ENCODE measurements at regions of chr6 and their contacts with region 1.

Region 1: GRCh38 chr6:22062807-22063408 is 233.9 kb downstream of the PRL start:
- DNase-seq: peak; percentile 9 to 88 (median 65)
- ATAC-seq: peak; percentile 85
- H3K4me3 ChIP-seq: peak overlapping the region; percentile 12
- H3K4me3 Mint-ChIP-seq: peak overlapping the region; percentile 30 to 87 (median 75)
- H3K27ac ChIP-seq: peak overlapping the region; percentile 9
- H3K27ac Mint-ChIP-seq: peak overlapping the region; percentile 30 to 94 (median 80)
- H3K4me1 ChIP-seq: no peaks in the 10 kb centered on the region
- H3K4me1 Mint-ChIP-seq: peaks cover 12 to 42% (median 21%) of the 10 kb centered on the region in 7 donors
- H3K27me3 ChIP-seq: no peaks in the 10 kb centered on the region
- H3K27me3 Mint-ChIP-seq: peaks cover 0 to 15% (median 2%) of the 10 kb centered on the region in 5 donors

Region 2: GRCh38 chr6:22025468-22026160 is 37.3 kb before region 1 on chr6:
- CTCF ChIA-PET with region 1: no interaction called
- POLR2A ChIA-PET with region 1: no interaction called
- intact Hi-C with region 1: loop called in 1 of 2 experiments (anchors 5 kb)
- DNase-seq: peak in 3 of 9 donors; percentile 2 to 29 (median 7)
- ATAC-seq: peak; percentile 70
- H3K4me3 ChIP-seq: no peak overlapping the region
- H3K4me3 Mint-ChIP-seq: peak overlapping the region in 5 of 10 donors; percentile 1 to 52 (median 12)
- H3K27ac ChIP-seq: no peak overlapping the region
- H3K27ac Mint-ChIP-seq: peak overlapping the region in 7 of 9 donors; percentile 10 to 84 (median 49)
- H3K4me1 ChIP-seq: no peaks in the 10 kb centered on the region
- H3K4me1 Mint-ChIP-seq: peaks cover 0 to 47% (median 29%) of the 10 kb centered on the region in 7 donors
- H3K27me3 ChIP-seq: no peaks in the 10 kb centered on the region
- H3K27me3 Mint-ChIP-seq: peaks cover 0 to 11% (median 0%) of the 10 kb centered on the region in 5 donors

Measured in naive thymus-derived CD4-positive, alpha-beta T cell (primary cell).